ENCODE measurements at regions of chr12 and their contacts with region 1.

Region 1: GRCh38 chr12:118372541-118373495 is at the start of gene TAOK3:
- DNase-seq: peak; percentile 98
- H3K4me3 Mint-ChIP-seq: peak within 1 kb of the TSS; percentile 97
- H3K27ac Mint-ChIP-seq: peak within 1 kb of the TSS; percentile 97
- H3K4me1 Mint-ChIP-seq: peaks cover 48% of the 10 kb centered on the region
- H3K27me3 Mint-ChIP-seq: peaks cover 14% of the 10 kb centered on the region
- total RNA-seq, gene TAOK3: 52.5 to 63.3 TPM

Region 2: DNA sequence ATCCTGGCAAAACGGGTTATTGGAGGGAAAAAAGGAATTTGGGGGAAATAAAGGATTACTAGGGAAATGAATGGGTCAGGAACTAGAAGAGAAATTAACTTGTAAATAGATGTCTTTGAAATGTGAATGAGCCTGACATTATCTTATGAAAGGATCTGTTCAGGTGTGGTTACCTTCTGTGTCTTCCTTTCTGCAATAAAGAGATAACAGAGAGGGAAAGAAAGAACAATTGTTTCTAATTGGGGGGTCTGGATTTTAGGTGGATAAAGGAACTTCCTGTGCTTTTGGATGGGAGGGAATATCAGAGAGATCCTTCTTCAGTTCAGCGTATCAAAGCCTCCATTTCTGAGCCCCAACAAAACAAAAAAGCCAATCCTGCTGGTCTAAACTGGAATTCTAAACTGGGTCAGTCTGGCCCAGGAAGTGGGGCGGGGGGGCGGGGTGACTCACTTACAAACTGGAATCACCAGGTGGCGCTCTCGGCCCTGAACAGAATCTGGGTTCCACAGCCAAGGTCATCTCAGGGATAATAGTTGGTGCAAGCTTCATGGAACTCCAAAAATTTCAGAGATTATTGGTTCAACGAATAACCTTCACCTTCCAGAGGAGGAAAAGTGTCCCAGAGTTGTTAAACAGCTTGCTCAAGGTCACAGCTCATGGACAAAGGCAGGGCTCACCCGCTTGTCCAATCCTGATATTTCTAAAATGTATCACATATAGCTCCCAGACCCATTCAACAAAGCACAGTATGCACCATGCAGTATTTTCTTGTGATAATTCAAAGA is 252.0 kb before region 1 on chr12:
- CTCF ChIA-PET with region 1: interaction called, 35 read pairs
- POLR2A ChIA-PET with region 1: no interaction called
- DNase-seq: peak; percentile 67
- H3K4me3 Mint-ChIP-seq: no peak overlapping the region
- H3K27ac Mint-ChIP-seq: peak overlapping the region; percentile 52
- H3K4me1 Mint-ChIP-seq: peaks cover 9% of the 10 kb centered on the region
- H3K27me3 Mint-ChIP-seq: no peaks in the 10 kb centered on the region

Region 3: GRCh38 chr12:118166946-118167345 is 205.9 kb before region 1 on chr12:
- CTCF ChIA-PET with region 1: interaction called, 14 read pairs
- POLR2A ChIA-PET with region 1: no interaction called
- DNase-seq: no peak
- H3K4me3 Mint-ChIP-seq: no peak overlapping the region
- H3K27ac Mint-ChIP-seq: no peak overlapping the region
- H3K4me1 Mint-ChIP-seq: peaks cover 23% of the 10 kb centered on the region
- H3K27me3 Mint-ChIP-seq: no peaks in the 10 kb centered on the region

Region 4: DNA sequence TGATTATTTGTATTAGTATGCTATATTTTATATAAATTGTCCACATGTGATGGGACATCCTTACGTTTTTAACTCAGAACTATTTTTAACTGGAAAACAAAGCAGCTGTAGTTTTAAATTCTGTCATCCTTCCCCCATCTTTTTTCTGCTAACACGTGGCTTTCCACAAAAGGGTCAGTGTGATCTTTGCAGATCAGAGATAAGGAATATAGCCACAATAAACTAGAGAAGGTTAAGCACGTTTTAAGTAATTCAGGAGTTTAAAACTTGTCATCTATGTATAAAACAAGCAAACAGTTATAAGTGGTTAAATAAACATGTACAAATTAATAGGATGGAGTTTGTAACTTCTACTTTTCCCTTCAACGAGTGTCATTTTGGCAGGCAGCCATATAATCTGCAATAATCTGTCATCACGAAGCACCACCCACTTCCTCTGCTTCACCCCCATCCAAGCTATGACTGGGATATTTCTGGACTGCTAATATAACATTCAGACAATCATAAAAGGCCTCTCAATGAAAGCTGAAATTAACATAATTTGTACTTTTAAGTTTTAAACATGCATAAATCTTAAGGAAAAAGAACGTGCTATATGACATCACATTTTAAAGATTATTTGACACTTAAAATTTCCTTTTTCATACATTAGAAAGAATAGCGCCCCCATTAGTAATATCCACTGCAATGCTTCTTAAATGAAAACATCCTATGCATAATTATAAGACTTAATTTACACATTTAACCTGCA is 15.4 kb before region 1 on chr12:
- CTCF ChIA-PET with region 1: interaction called, 59 read pairs
- POLR2A ChIA-PET with region 1: interaction called, 4 read pairs
- DNase-seq: peak; percentile 54
- H3K4me3 Mint-ChIP-seq: peak overlapping the region; percentile 94
- H3K27ac Mint-ChIP-seq: peak overlapping the region; percentile 91
- H3K4me1 Mint-ChIP-seq: peaks cover 45% of the 10 kb centered on the region
- H3K27me3 Mint-ChIP-seq: no peaks in the 10 kb centered on the region

Region 5: GRCh38 chr12:118398940-118399339 is 26.1 kb after region 1 on chr12:
- CTCF ChIA-PET with region 1: interaction called, 12 read pairs
- POLR2A ChIA-PET with region 1: no interaction called
- DNase-seq: no peak
- H3K4me3 Mint-ChIP-seq: no peak overlapping the region
- H3K27ac Mint-ChIP-seq: no peak overlapping the region
- H3K4me1 Mint-ChIP-seq: no peaks in the 10 kb centered on the region
- H3K27me3 Mint-ChIP-seq: no peaks in the 10 kb centered on the region